ENCODE measurements at regions of chrX and their contacts with region 1.

Region 1: DNA sequence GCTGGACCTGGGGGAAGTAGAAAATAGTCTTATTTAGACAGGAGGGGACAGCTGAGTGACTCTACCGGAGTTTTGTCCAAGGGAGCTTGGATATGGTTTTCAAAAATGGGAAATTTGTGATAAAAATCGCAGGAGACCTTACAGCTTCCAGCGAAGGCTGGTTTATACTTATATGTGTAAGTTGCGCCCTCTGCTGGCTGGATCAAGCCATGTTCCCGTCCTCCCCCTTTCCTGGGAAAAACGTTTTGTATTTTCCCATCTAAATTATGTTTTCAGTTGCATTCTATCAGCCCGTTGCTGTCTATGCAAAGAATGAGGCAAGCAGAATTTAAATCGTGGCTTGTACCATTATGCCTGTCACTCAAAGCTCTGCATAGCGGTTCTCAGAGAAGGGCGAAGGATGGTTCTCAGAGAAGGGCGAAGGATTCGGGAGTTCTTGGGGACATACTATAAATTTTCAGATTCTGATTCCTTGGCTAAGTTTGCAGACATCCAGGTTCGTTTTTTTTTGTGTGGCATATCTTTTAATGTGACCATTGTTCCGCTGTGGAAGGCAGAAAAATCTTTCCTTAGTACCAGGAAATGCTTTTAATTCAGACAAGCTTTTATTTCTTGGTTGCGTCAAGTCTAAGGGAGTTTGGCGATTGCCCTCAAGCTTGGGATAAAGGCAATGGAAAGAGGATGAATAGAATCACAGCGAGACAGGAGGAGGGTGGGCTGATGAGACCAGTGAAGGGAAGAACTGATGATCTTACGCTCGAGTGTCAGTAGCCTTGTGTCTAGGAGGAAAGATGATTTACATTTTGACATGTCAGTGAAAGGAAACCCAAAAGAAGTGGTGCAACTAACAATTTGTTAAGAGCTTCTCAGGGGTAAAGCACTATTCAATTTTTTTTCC is 128.5 kb upstream of the ARX start:
- DNase-seq: peak; percentile 0 to 55 (median 13)
- ATAC-seq: no peak
- H3K4me3 ChIP-seq: no peak overlapping the region
- H3K4me3 Mint-ChIP-seq: no peak overlapping the region
- H3K27ac ChIP-seq: no peak overlapping the region
- H3K27ac Mint-ChIP-seq: no peak overlapping the region
- H3K4me1 ChIP-seq: no peaks in the 10 kb centered on the region
- H3K4me1 Mint-ChIP-seq: no peaks in the 10 kb centered on the region
- H3K27me3 ChIP-seq: peaks cover 0 to 13% of the 10 kb centered on the region in 2 experiments
- H3K27me3 Mint-ChIP-seq: peaks cover 28% of the 10 kb centered on the region
- CTCF ChIP-seq: peak; percentile 51

Region 2: DNA sequence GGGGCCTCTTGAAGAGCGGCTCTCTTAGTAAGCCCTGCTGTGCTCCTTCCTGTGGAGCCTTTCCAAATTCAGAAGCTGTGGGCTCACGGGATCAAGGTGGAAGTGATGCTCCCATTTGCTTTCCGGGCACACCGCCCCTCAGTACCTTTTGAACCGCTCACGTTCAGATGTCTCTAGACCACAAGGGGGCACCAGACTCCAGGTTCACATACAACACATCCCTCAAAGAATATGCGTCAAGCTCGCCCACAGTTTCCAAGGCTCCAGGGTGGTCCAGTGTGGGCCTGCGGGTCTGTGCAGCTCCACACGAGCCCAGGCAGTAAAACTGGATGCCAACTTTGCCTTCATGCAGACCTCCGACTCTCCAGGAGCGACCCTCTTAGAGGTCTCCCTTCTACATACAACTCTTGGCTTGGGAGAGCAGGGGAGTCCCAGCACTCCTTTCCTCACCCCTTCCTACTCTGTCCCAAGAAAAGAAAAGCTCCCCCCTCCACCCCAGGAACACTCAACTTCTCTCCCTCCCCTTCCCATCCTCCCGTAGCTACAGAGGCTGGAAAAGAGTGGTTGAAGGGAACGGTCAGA is 772.8 kb before region 1 on chrX:
- CTCF ChIA-PET with region 1: no interaction called
- POLR2A ChIA-PET with region 1: no interaction called
- intact Hi-C with region 1: loop called in 1 of 2 experiments (anchors 5 kb)
- DNase-seq: peak; percentile 24 to 78 (median 40)
- ATAC-seq: peak; percentile 73
- H3K4me3 ChIP-seq: no peak overlapping the region
- H3K4me3 Mint-ChIP-seq: no peak overlapping the region
- H3K27ac ChIP-seq: no peak overlapping the region
- H3K27ac Mint-ChIP-seq: no peak overlapping the region
- H3K4me1 ChIP-seq: peaks cover 6% of the 10 kb centered on the region
- H3K4me1 Mint-ChIP-seq: peaks cover 6% of the 10 kb centered on the region
- H3K27me3 ChIP-seq: no peaks in the 10 kb centered on the region
- H3K27me3 Mint-ChIP-seq: no peaks in the 10 kb centered on the region
- CTCF ChIP-seq: peak; percentile 58

Region 3: GRCh38 chrX:24759786-24760185 is 384.5 kb before region 1 on chrX:
- CTCF ChIA-PET with region 1: no interaction called
- POLR2A ChIA-PET with region 1: no interaction called
- intact Hi-C with region 1: loop called (anchors 5 kb)
- DNase-seq: no peak
- ATAC-seq: no peak
- H3K4me3 ChIP-seq: no peak overlapping the region
- H3K4me3 Mint-ChIP-seq: no peak overlapping the region
- H3K27ac ChIP-seq: no peak overlapping the region
- H3K27ac Mint-ChIP-seq: no peak overlapping the region
- H3K4me1 ChIP-seq: no peaks in the 10 kb centered on the region
- H3K4me1 Mint-ChIP-seq: no peaks in the 10 kb centered on the region
- H3K27me3 ChIP-seq: no peaks in the 10 kb centered on the region
- H3K27me3 Mint-ChIP-seq: no peaks in the 10 kb centered on the region
- CTCF ChIP-seq: no peak

Region 4: DNA sequence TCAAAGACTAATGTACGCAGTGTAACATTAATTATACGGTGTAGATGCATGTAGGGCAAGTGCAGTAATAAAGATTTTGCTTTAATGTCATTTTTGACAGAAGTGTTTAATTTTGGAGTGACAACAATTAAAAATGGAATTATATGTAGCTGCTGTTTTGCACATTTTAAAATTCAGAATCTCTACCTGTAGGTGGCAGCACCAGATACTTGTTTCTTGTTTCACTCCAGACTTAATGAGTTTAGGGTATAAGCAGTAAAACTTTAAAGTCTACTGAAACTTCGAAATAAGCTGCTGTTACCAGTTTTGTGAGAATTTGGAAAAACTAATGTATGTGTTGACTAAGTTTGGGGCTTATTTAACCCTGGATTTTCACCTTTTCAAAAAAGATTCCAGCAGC is 305.7 kb before region 1 on chrX:
- CTCF ChIA-PET with region 1: interaction called, 4 read pairs
- POLR2A ChIA-PET with region 1: interaction called, 4 read pairs
- intact Hi-C with region 1: loop called (anchors 1 to 2 kb)
- DNase-seq: peak in 3 of 14 experiments; percentile 24 to 29 (median 27)
- ATAC-seq: no peak
- H3K4me3 ChIP-seq: no peak overlapping the region
- H3K4me3 Mint-ChIP-seq: no peak overlapping the region
- H3K27ac ChIP-seq: no peak overlapping the region
- H3K27ac Mint-ChIP-seq: no peak overlapping the region
- H3K4me1 ChIP-seq: no peaks in the 10 kb centered on the region
- H3K4me1 Mint-ChIP-seq: no peaks in the 10 kb centered on the region
- H3K27me3 ChIP-seq: no peaks in the 10 kb centered on the region
- H3K27me3 Mint-ChIP-seq: no peaks in the 10 kb centered on the region
- CTCF ChIP-seq: peak; percentile 45

Region 5: DNA sequence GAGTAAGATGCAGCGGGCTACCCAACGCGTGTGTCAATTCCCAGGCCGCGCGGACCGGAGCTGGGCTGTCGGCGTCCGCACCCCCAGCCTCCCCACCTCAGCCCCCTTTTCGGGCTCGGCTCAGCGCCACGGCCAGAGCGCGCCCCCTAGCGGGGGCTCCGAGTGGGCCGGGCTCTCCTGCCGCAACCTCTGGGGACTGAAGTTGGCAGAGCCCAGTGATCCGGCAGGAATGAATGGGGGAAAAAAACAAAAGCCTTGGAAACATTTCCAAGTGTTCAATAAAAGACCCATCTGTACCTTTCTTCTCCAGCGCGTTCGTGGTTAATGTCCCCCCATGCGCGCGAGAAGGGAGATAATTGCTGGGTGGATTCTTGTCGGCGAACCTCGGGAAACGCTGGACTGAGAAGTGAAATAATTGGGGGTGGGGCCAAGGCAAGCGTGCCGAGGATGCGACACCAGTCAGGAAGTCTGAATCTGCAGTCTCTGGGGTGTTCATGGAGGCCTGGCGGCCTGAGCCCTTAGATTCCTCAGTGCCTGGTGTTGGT is 123.3 kb before region 1 on chrX:
- CTCF ChIA-PET with region 1: no interaction called
- POLR2A ChIA-PET with region 1: no interaction called
- intact Hi-C with region 1: no loop called
- DNase-seq: peak in 7 of 14 experiments; percentile 8 to 50 (median 19)
- ATAC-seq: peak; percentile 37
- H3K4me3 ChIP-seq: no peak overlapping the region
- H3K4me3 Mint-ChIP-seq: peak overlapping the region; percentile 63
- H3K27ac ChIP-seq: no peak overlapping the region
- H3K27ac Mint-ChIP-seq: no peak overlapping the region
- H3K4me1 ChIP-seq: peaks cover 41% of the 10 kb centered on the region
- H3K4me1 Mint-ChIP-seq: peaks cover 42% of the 10 kb centered on the region
- H3K27me3 ChIP-seq: peaks cover 61 to 82% of the 10 kb centered on the region in 2 experiments
- H3K27me3 Mint-ChIP-seq: peaks cover 79% of the 10 kb centered on the region
- CTCF ChIP-seq: peak; percentile 40

Measured in CD4-positive, alpha-beta T cell (primary cell).